ENCODE measurements at regions of chr21 and their contacts with region 1.

Region 1: GRCh38 chr21:42258153-42258884 is 39.4 kb downstream of the ABCG1 start:
- DNase-seq: peak; percentile 49 to 96 (median 80)

Region 2: GRCh38 chr21:41715649-41716281 is 542.6 kb before region 1 on chr21:
- intact Hi-C with region 1: no loop called
- DNase-seq: peak in 1 of 10 donors; percentile 74

Region 3: DNA sequence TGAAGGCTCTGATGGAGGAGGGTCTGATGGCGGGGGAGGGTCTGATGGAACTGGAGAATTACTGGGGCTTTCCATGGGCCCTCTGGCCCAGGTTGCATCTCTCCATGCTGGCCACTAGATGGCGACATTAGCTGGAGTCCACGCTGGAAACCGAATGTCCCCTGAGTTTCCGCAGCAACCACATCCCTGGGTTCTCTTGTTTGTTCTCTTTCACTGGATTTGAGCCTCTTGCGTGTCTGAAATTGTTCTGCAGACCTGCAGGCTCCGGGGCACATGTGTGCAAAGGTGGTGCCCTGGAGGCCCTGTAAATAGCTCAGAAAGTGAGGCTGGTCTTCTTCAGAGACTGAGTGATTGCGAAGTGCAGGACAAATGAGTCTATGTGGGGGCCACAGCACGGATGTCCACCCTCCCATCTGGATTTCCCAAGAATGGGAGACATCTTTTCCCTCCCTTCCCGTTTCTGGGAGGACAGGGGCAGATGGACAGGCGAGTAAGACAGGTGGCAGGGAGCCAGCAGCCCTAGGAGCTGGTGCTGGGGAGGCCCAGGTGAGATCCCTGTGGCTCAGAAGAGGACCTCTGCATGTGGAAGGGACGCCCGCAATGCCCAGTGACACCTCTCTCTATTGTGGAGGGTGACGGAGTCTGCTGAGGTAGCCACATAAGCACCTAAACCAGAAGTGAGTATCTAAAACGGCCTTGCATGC is 112.6 kb before region 1 on chr21:
- intact Hi-C with region 1: loop called (anchors 5 kb)
- DNase-seq: peak; percentile 35 to 96 (median 68)

Region 4: GRCh38 chr21:42164064-42164789 is 94.1 kb before region 1 on chr21:
- intact Hi-C with region 1: loop called (anchors 5 kb)
- DNase-seq: peak in 8 of 10 donors; percentile 52 to 94 (median 70)

Region 5: DNA sequence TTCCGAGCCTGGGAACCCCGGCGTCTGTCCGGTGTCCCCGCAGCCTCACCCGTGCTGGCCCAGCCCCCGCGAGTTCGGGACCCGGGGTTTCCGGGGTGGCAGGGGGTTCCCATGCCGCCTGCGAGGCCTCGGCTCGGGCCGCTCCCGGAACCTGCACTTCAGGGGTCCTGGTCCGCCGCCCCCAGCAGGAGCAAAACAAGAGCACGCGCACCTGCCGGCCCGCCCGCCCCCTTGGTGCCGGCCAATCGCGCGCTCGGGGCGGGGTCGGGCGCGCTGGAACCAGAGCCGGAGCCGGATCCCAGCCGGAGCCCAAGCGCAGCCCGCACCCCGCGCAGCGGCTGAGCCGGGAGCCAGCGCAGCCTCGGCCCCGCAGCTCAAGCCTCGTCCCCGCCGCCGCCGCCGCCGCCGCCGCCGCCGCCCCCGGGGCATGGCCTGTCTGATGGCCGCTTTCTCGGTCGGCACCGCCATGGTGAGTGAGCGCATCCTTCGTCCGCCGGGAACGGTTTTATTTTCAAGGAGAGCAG is 39.4 kb before region 1 on chr21 and contains the start of gene ABCG1:
- intact Hi-C with region 1: loop called (anchors 5 kb)
- DNase-seq: peak; percentile 41 to 96 (median 66)

Region 6: GRCh38 chr21:42862774-42863503 is 604.6 kb after region 1 on chr21:
- intact Hi-C with region 1: no loop called
- DNase-seq: peak in 3 of 10 donors; percentile 56 to 81 (median 67)